ENCODE measurements at regions of chr6 and their contacts with region 1.

Region 1: DNA sequence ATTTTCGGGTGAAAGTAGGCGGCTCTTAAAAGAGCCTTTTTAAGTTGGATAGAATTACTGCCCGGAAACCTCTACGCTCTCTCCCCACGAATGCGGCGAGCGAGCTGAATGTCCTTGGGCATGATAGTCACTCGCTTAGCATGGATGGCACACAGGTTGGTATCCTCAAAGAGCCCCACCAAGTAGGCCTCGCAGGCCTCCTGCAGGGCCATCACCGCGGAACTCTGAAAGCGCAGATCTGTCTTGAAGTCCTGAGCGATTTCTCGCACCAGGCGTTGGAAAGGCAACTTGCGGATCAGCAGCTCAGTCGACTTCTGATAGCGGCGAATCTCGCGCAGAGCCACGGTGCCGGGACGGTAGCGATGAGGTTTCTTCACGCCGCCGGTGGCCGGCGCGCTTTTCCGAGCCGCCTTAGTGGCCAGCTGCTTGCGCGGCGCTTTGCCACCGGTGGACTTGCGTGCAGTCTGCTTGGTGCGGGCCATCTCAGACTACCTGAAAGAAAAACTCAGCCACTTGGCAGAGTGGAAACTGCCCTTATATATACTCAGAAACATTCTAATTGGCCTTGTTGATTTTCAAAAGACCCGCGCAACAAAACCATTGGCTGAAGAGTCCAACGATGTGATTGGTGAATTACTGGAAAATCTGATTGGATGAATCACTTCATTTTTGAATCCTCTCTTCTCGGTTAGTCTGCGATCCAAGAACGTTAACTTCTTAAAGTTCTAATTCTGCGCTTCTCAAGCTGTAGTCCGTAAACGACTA is 93.9 kb upstream of the BTN3A2 start:
- DNase-seq: peak; percentile 97
- H3K27ac ChIP-seq: peak overlapping the region; percentile 98
- CTCF ChIP-seq: no peak

Region 2: DNA sequence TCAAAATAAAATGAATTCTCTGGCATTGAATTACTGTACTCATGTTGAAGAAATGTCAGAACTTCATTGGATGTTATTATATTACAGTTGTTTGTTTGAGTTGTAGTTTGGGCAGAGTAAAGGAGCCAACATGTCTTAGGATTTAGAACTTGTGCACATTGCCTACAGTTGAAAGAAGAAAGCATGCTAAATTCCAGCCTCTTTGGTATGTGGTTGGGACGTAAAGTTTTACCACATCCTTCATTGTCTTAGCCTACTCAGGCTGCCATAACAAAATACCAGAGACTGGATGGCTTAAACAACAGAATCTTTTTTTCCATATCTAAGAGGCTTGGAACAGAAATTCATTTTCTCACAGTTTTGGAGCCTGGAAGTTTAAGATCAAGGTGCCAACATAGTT is 141.4 kb before region 1 on chr6:
- CTCF ChIA-PET with region 1: no interaction called
- POLR2A ChIA-PET with region 1: no interaction called
- DNase-seq: no peak
- H3K27ac ChIP-seq: no peak overlapping the region
- CTCF ChIP-seq: no peak

Region 3: DNA sequence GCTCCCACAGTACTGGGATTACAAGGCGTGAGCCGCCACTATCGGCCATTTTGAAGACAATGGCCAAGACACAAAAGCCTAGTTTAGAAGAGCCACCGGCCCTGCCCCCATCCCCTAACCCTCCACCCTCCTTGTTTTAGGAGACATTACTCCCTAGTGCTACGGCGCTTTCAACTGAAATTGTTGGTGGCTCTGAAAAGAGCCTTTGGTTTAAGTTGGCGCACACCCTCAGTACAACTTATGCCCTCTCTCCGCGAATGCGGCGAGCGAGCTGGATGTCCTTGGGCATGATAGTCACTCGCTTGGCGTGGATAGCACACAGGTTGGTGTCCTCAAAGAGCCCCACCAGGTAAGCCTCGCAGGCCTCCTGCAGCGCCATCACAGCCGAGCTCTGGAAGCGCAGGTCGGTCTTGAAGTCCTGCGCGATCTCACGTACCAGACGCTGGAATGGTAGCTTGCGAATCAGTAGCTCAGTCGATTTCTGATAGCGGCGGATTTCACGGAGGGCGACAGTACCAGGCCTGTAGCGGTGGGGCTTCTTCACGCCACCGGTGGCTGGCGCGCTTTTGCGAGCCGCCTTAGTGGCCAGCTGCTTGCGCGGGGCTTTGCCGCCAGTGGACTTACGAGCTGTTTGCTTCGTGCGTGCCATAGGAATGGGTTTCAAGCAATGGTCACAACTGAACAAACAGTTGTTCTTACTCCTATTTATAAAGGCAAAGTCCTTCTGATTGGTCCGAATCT is 21.0 kb before region 1 on chr6:
- CTCF ChIA-PET with region 1: interaction called, 6 read pairs
- POLR2A ChIA-PET with region 1: interaction called, 10 read pairs
- DNase-seq: no peak
- H3K27ac ChIP-seq: peak overlapping the region; percentile 98
- CTCF ChIP-seq: peak; percentile 56

Region 4: GRCh38 chr6:26285143-26286134 is 14.4 kb after region 1 on chr6:
- CTCF ChIA-PET with region 1: interaction called, 4 read pairs
- POLR2A ChIA-PET with region 1: interaction called, 11 read pairs
- DNase-seq: peak; percentile 96
- H3K27ac ChIP-seq: peak overlapping the region; percentile 94
- CTCF ChIP-seq: no peak

Measured in RWPE1 (cell line).